ENCODE measurements at regions of chr9 and their contacts with region 1.

Region 1: DNA sequence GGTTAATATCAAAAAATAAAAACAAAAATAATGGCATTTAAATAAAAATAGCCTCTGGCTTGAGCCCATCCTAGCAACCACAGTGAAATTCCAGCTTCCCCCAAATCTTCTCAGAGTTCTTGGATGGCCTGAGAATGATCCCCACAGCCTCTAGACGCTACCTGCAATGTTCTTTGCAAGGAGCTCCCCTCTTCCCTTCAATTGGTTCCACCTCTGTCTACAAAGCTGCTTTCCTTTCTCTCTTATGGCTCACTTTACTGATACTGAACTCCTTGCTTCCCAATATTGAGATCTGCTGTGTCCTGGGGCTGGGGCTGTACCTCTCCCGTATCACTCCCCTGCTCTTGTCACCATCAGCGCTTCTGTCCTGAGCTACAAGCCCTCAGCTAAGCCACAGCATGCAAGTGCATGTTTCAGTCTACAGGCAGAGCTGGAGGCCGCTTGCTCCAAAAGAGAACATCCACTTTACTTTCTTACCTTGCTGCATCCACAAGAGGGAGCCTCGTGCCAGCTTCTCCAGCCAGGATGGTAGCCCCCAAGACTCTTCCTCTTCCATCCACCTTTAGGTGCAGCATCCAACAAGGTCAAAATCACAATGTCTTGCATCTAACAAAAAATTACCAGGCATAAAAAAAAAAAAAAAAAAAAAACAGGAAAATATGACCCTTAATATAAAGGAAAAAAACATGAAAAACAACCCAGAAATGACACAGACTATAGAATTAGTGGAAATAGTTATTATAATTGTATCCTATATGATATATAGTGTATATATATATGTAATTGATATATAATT is 57.4 kb upstream of the PRSS3 start:
- DNase-seq: peak; percentile 54
- H3K4me3 ChIP-seq: no peak overlapping the region
- H3K27ac ChIP-seq: no peak overlapping the region
- H3K4me1 ChIP-seq: no peaks in the 10 kb centered on the region
- CTCF ChIP-seq: peak; percentile 80

Region 2: GRCh38 chr9:33778700-33779351 is 40.8 kb after region 1 on chr9:
- CTCF ChIA-PET with region 1: interaction called, 3 read pairs
- POLR2A ChIA-PET with region 1: no interaction called
- intact Hi-C with region 1: loop called (anchors 2 kb)
- DNase-seq: peak; percentile 75
- H3K4me3 ChIP-seq: no peak overlapping the region
- H3K27ac ChIP-seq: no peak overlapping the region
- H3K4me1 ChIP-seq: peaks cover 4% of the 10 kb centered on the region
- CTCF ChIP-seq: peak; percentile 89

Region 3: DNA sequence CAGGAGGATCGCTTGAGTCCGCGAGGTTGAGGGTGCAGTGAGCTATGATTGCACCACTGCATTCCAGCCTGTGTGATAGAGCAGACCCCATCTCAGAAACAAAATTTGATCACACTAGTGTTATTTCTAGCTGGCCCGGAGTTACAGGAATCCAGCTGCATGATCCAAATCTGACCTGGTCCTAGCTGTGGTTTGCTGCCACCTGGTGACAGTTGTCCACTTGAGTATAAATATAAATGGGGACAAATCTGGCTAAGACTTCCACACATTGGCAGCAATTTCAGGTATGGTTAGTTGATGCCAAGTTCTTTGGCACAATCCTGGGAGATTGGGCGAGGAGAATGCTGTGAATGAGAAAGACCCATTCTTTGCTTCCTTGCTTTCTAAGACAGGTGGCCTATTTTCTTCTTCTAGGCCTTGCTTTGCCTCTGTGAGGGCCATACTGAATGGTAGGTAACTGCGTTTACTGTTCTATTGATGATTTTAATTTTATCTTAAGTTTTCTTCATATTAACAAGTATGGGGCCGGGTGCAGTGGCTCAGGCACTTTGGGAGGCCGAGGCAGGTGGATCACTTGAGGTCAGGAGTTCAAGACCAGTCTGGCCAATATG is 114.3 kb after region 1 on chr9:
- CTCF ChIA-PET with region 1: no interaction called
- POLR2A ChIA-PET with region 1: no interaction called
- intact Hi-C with region 1: loop called (anchors 5 kb)
- DNase-seq: peak; percentile 74
- H3K4me3 ChIP-seq: no peak overlapping the region
- H3K27ac ChIP-seq: peak overlapping the region; percentile 31
- H3K4me1 ChIP-seq: peaks cover 53% of the 10 kb centered on the region
- CTCF ChIP-seq: peak; percentile 83

Region 4: GRCh38 chr9:34123682-34124081 is 385.7 kb after region 1 on chr9:
- CTCF ChIA-PET with region 1: no interaction called
- POLR2A ChIA-PET with region 1: no interaction called
- intact Hi-C with region 1: no loop called
- DNase-seq: peak; percentile 85
- H3K4me3 ChIP-seq: peak overlapping the region; percentile 85
- H3K27ac ChIP-seq: peak overlapping the region; percentile 81
- H3K4me1 ChIP-seq: peaks cover 43% of the 10 kb centered on the region
- CTCF ChIP-seq: no peak